ENCODE measurements at regions of chrX and their contacts with region 1.

Region 1: GRCh38 chrX:37926700-37927099 is 79.3 kb upstream of the DYNLT3 start:
- DNase-seq: no peak
- ATAC-seq: peak; percentile 52

Region 2: DNA sequence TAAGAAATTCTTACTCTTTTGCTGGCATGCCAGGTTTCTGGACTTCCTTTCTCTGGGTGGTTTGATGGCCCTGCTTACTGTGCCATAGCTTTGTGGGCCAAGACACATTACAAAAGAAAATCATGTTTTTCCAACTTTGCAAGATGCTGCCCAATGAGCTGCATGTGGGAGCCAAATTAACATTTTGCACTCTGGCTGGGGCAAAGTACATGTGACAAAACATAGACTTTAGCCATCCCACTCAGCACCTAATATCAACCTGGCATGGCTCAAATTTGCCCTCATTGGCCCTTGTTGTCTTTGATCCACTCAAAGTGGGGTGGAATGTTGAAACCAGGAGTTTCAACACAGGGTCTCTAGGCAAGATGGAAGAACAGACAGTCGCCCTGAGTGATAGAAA is 39.4 kb before region 1 on chrX:
- intact Hi-C with region 1: no loop called
- DNase-seq: no peak
- ATAC-seq: no peak

Region 3: DNA sequence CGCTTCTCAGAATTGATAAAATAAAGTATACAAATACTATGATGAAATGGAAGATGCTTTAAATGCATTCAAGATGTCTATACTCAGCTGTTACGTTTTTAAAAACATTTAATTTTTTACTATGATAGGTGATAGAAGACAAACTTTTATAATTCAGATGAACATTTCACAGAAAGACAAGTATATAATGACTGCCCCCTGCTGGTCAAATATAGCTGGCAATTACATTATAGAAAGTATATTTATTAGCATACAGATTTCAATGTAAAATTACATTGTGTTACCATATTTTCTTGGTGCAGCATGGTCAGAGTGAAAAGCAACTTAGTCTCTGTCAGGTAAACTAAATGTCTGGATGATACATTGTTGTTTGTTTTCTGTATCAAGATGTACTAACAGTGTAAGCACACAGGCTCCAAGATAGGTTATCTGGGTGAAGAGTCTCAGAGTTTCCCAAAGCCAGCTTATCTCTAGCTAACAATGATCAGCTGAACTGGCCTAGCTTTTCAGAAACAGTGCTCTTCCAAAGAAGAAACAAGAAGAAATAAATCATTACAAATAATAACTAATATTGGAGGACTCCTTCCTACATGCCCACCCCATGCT is 239.9 kb after region 1 on chrX:
- intact Hi-C with region 1: loop called (anchors 10 kb)
- DNase-seq: no peak
- ATAC-seq: no peak